Activated CD4-positive, alpha-beta T cell treated with anti-CD3 and anti-CD28 coated beads for 36 hours (primary cell): ENCODE measurements at regions of chr9 and their contacts with region 1.

Region 1: GRCh38 chr9:121156263-121156731 is 45.4 kb downstream of the RAB14 start:
- DNase-seq: no peak
- ATAC-seq: peak; percentile 94
- H3K4me3 Mint-ChIP-seq: no peak overlapping the region
- H3K27ac Mint-ChIP-seq: peak overlapping the region; percentile 92
- H3K4me1 Mint-ChIP-seq: peaks cover 29% of the 10 kb centered on the region
- H3K27me3 Mint-ChIP-seq: no peaks in the 10 kb centered on the region

Region 2: DNA sequence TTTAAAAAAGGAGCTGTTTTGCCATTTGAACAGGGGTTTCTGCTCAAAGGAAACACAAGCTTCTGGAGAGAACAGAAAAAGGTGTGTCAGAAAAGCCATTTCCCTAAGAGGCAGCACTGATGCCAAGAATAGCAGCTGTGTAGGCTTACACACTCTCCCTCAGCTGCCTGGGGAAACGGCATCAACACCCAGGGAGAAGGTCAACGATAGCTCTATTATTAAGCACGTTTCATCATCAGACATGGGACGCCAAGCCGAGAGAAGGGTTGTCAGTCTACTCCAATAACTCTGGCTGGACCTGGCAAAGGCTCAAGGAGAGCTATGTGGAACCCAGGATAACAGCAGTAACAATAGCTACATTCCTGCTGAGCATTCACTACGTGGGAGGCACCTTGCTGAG is 890.5 kb before region 1 on chr9:
- CTCF ChIA-PET with region 1: no interaction called
- POLR2A ChIA-PET with region 1: no interaction called
- intact Hi-C with region 1: no loop called
- DNase-seq: no peak
- ATAC-seq: no peak
- H3K4me3 Mint-ChIP-seq: no peak overlapping the region
- H3K27ac Mint-ChIP-seq: no peak overlapping the region
- H3K4me1 Mint-ChIP-seq: no peaks in the 10 kb centered on the region
- H3K27me3 Mint-ChIP-seq: peaks cover 4% of the 10 kb centered on the region

Region 3: GRCh38 chr9:120944434-120944843 is 211.9 kb before region 1 on chr9:
- CTCF ChIA-PET with region 1: no interaction called
- POLR2A ChIA-PET with region 1: no interaction called
- intact Hi-C with region 1: no loop called
- DNase-seq: no peak
- ATAC-seq: no peak
- H3K4me3 Mint-ChIP-seq: no peak overlapping the region
- H3K27ac Mint-ChIP-seq: no peak overlapping the region
- H3K4me1 Mint-ChIP-seq: no peaks in the 10 kb centered on the region
- H3K27me3 Mint-ChIP-seq: no peaks in the 10 kb centered on the region

Region 4: GRCh38 chr9:121196389-121196788 is 40.1 kb after region 1 on chr9:
- CTCF ChIA-PET with region 1: interaction called, 3 read pairs
- POLR2A ChIA-PET with region 1: no interaction called
- intact Hi-C with region 1: loop called in 1 of 2 experiments (anchors 5 kb)
- DNase-seq: no peak
- ATAC-seq: no peak
- H3K4me3 Mint-ChIP-seq: peak overlapping the region; percentile 19
- H3K27ac Mint-ChIP-seq: peak overlapping the region; percentile 25
- H3K4me1 Mint-ChIP-seq: peaks cover 76% of the 10 kb centered on the region
- H3K27me3 Mint-ChIP-seq: no peaks in the 10 kb centered on the region